ENCODE measurements at regions of chrX and their contacts with region 1.

Region 1: GRCh38 chrX:76279000-76279399 is 106.1 kb downstream of the PBDC1 start:
- DNase-seq: peak in 1 of 2 experiments; percentile 31
- H3K4me3 ChIP-seq: no peak overlapping the region
- H3K27ac ChIP-seq: no peak overlapping the region
- H3K4me1 ChIP-seq: no peaks in the 10 kb centered on the region
- H3K27me3 ChIP-seq: no peaks in the 10 kb centered on the region
- CTCF ChIP-seq: peak; percentile 71

Region 2: GRCh38 chrX:75957107-75957610 is 321.8 kb before region 1 on chrX:
- CTCF ChIA-PET with region 1: no interaction called
- POLR2A ChIA-PET with region 1: no interaction called
- intact Hi-C with region 1: no loop called
- DNase-seq: no peak
- H3K4me3 ChIP-seq: no peak overlapping the region
- H3K27ac ChIP-seq: no peak overlapping the region
- H3K4me1 ChIP-seq: no peaks in the 10 kb centered on the region
- H3K27me3 ChIP-seq: no peaks in the 10 kb centered on the region
- CTCF ChIP-seq: no peak

Region 3: GRCh38 chrX:76454456-76454927 is 175.5 kb after region 1 on chrX:
- CTCF ChIA-PET with region 1: interaction called, 4 read pairs
- POLR2A ChIA-PET with region 1: no interaction called
- intact Hi-C with region 1: loop called (anchors 2 kb)
- DNase-seq: no peak
- H3K4me3 ChIP-seq: no peak overlapping the region
- H3K27ac ChIP-seq: no peak overlapping the region
- H3K4me1 ChIP-seq: no peaks in the 10 kb centered on the region
- H3K27me3 ChIP-seq: no peaks in the 10 kb centered on the region
- CTCF ChIP-seq: peak; percentile 64

Measured in PC-9 (cell line).